CD8-positive, alpha-beta memory T cell (primary cell): ENCODE measurements at regions of chr1 and their contacts with region 1.

Region 1: GRCh38 chr1:85259118-85259911 is at the start of gene C1orf52:
- DNase-seq: peak; percentile 95 to 98 (median 95)
- H3K4me3 ChIP-seq: peak within 1 kb of the TSS; percentile 90
- H3K4me3 Mint-ChIP-seq: peak within 1 kb of the TSS; percentile 97 to 100 (median 98)
- H3K27ac ChIP-seq: peak within 1 kb of the TSS; percentile 85
- H3K27ac Mint-ChIP-seq: peak within 1 kb of the TSS; percentile 91 to 99 (median 98)
- H3K4me1 ChIP-seq: peaks cover 25% of the 10 kb centered on the region
- H3K4me1 Mint-ChIP-seq: peaks cover 33 to 53% (median 48%) of the 10 kb centered on the region in 3 donors
- H3K27me3 ChIP-seq: no peaks in the 10 kb centered on the region
- H3K27me3 Mint-ChIP-seq: no peaks in the 10 kb centered on the region
- total RNA-seq, gene C1orf52: 27.7 to 29.3 TPM

Region 2: GRCh38 chr1:84936116-84936810 is 323.1 kb before region 1 on chr1:
- CTCF ChIA-PET with region 1: interaction called, 114 read pairs
- POLR2A ChIA-PET with region 1: no interaction called
- DNase-seq: peak in 3 of 5 donors; percentile 52 to 60 (median 54)
- H3K4me3 ChIP-seq: no peak overlapping the region
- H3K4me3 Mint-ChIP-seq: no peak overlapping the region
- H3K27ac ChIP-seq: no peak overlapping the region
- H3K27ac Mint-ChIP-seq: peak overlapping the region in 1 of 8 donors; percentile 63
- H3K4me1 ChIP-seq: no peaks in the 10 kb centered on the region
- H3K4me1 Mint-ChIP-seq: peaks cover 2 to 7% (median 4%) of the 10 kb centered on the region in 3 donors
- H3K27me3 ChIP-seq: no peaks in the 10 kb centered on the region
- H3K27me3 Mint-ChIP-seq: no peaks in the 10 kb centered on the region

Region 3: DNA sequence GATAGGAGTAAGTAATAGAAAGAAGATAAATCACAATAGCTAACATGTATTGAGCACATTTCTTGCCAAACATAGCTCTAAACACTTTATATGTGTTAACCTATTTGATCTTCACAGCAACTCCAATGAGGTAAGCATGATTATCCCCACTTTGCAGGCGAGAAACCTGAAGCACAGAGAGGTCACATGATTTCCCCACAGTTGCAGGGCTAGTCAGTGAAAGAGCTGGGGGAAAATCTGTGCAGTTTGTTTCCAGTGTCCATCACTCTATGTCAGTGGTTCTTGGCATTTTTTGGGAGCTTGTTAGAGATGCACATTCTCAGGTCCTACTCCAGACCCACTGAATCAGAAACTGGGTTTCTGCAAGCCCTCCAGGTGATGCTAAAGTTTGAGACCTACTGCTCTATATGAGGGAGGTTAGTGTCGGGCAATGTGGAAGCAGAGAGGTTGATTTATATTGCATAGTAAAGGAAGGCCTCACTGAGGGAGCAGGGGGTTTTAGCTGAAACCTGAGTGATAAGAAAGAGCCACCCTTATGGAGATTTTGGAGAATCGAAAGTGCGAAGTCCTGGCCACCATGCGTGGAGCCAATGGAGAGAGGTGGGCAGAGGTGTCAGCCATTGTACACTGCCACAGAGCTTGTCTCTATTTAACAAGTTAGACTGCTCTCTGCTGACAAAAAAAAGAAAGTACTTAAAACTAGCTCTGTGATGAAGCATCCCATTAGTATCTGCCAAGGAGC is 231.9 kb before region 1 on chr1:
- CTCF ChIA-PET with region 1: interaction called, 14 read pairs
- POLR2A ChIA-PET with region 1: no interaction called
- DNase-seq: peak in 4 of 5 donors; percentile 28 to 69 (median 52)
- H3K4me3 ChIP-seq: peak overlapping the region; percentile 13
- H3K4me3 Mint-ChIP-seq: peak overlapping the region; percentile 67 to 93 (median 88)
- H3K27ac ChIP-seq: peak overlapping the region; percentile 34
- H3K27ac Mint-ChIP-seq: peak overlapping the region; percentile 55 to 96 (median 93)
- H3K4me1 ChIP-seq: peaks cover 8% of the 10 kb centered on the region
- H3K4me1 Mint-ChIP-seq: peaks cover 10 to 18% (median 14%) of the 10 kb centered on the region in 3 donors
- H3K27me3 ChIP-seq: no peaks in the 10 kb centered on the region
- H3K27me3 Mint-ChIP-seq: no peaks in the 10 kb centered on the region

Region 4: DNA sequence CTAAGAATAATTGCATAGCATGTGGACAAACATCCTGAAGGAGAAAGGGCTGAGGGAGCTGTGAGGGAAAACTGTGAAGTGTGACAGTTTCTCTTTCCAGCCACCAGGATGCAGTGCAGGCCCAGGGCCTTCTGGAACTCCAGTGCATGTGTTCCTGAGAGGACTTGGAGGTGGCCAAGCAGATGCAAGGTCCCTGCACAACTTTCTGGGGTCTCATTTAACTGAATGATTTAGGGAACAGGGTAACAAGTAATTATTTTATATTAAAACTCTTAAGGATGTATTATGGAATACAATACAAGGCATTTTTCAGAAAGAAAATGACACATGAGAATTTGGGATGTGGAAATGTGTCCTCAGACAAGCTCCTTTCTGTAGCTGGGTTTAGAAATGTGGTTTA is 149.8 kb before region 1 on chr1:
- CTCF ChIA-PET with region 1: interaction called, 27 read pairs
- POLR2A ChIA-PET with region 1: interaction called, 3 read pairs
- DNase-seq: peak; percentile 1 to 62 (median 19)
- H3K4me3 ChIP-seq: no peak overlapping the region
- H3K4me3 Mint-ChIP-seq: no peak overlapping the region
- H3K27ac ChIP-seq: no peak overlapping the region
- H3K27ac Mint-ChIP-seq: no peak overlapping the region
- H3K4me1 ChIP-seq: no peaks in the 10 kb centered on the region
- H3K4me1 Mint-ChIP-seq: no peaks in the 10 kb centered on the region
- H3K27me3 ChIP-seq: no peaks in the 10 kb centered on the region
- H3K27me3 Mint-ChIP-seq: peaks cover 0 to 2% of the 10 kb centered on the region in 2 donors

Region 5: DNA sequence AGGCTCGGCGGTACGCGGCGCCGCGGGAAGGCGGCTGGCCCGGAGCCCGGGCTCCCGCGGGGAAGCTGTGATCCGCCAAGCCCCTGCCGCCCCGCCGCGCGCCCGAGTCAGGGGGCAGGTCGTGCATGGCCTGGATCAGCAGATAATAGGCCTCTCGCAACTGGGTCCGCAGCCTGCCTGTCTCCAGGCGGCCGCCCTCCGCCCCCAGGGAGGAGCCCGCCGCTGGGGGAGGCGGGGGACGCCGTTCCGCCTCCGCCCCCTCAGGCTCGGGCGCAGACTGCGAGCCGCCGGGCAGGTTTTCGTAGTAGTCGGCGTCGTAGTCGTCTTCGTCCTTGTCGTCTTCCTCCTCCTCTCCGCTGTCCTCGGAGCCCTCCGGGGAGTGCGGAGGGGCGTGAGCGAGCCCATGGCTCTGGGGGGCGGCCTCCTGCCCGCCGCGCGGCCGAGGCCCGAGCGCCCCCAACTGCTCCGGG is 58.4 kb before region 1 on chr1 and contains the start of gene SYDE2:
- CTCF ChIA-PET with region 1: interaction called, 10 read pairs
- POLR2A ChIA-PET with region 1: interaction called, 6 read pairs
- DNase-seq: peak; percentile 61 to 92 (median 83)
- H3K4me3 ChIP-seq: peak within 1 kb of the TSS; percentile 82
- H3K4me3 Mint-ChIP-seq: peak within 1 kb of the TSS; percentile 98 to 100 (median 99)
- H3K27ac ChIP-seq: peak within 1 kb of the TSS; percentile 86
- H3K27ac Mint-ChIP-seq: peak within 1 kb of the TSS; percentile 96 to 99 (median 98)
- H3K4me1 ChIP-seq: peaks cover 14% of the 10 kb centered on the region
- H3K4me1 Mint-ChIP-seq: peaks cover 24 to 49% (median 38%) of the 10 kb centered on the region in 3 donors
- H3K27me3 ChIP-seq: no peaks in the 10 kb centered on the region
- H3K27me3 Mint-ChIP-seq: peaks cover 7 to 14% of the 10 kb centered on the region in 2 donors
- total RNA-seq, gene SYDE2: 2.8 to 3.3 TPM

Region 6: DNA sequence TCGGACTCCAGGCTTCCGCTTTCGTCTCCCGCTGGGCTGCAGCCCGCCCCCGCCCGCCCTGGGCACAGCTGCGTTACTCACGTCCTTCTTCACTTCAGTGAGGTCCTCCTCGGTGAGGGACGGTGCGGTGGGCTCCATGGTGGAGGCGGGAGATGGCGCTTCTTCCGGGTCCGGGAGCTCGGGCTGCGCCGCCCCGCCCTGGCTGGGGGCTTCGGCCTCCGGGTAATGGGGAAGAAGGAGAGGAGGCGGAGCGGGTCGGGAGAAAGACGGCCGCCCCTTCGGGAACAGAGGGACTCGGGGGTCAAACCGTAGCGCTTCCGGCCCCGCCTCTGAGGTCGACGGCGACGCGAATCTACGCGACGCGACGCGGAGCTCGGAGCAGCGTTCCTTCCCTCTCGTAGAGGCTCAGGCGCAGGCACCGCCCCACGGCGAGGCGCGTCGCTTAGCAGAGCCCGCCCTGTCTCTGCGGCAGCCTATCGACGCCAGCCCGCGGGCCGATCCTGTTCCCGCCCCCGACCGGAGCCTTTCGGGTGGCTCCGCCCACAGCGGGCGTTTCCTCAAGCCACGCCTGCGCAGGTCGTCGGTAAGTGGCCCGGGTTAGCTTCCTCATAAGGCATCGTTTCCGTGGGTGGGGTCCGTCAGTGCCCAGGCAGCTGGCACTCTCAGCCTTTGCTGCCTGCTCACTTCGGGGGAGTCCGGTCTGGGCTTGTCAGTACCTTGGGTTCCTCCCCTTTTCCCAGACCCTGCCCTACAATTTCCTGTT is 17.1 kb after region 1 on chr1 and contains the start of gene BCL10:
- CTCF ChIA-PET with region 1: interaction called, 86 read pairs
- POLR2A ChIA-PET with region 1: interaction called, 42 read pairs
- DNase-seq: peak; percentile 97 to 98 (median 98)
- H3K4me3 ChIP-seq: peak within 1 kb of the TSS; percentile 89
- H3K4me3 Mint-ChIP-seq: peak within 1 kb of the TSS; percentile 87 to 95 (median 90)
- H3K27ac ChIP-seq: peak within 1 kb of the TSS; percentile 88
- H3K27ac Mint-ChIP-seq: peak within 1 kb of the TSS; percentile 89 to 98 (median 94)
- H3K4me1 ChIP-seq: peaks cover 33% of the 10 kb centered on the region
- H3K4me1 Mint-ChIP-seq: peaks cover 50 to 56% (median 53%) of the 10 kb centered on the region in 3 donors
- H3K27me3 ChIP-seq: no peaks in the 10 kb centered on the region
- H3K27me3 Mint-ChIP-seq: peaks cover 3 to 4% of the 10 kb centered on the region in 2 donors
- total RNA-seq, gene BCL10: 21.9 to 27.1 TPM